Activated CD4-positive, alpha-beta memory T cell treated with anti-CD3 and anti-CD28 coated beads for 36 hours (primary cell): ENCODE measurements at regions of chr17 and their contacts with region 1.

Region 1: DNA sequence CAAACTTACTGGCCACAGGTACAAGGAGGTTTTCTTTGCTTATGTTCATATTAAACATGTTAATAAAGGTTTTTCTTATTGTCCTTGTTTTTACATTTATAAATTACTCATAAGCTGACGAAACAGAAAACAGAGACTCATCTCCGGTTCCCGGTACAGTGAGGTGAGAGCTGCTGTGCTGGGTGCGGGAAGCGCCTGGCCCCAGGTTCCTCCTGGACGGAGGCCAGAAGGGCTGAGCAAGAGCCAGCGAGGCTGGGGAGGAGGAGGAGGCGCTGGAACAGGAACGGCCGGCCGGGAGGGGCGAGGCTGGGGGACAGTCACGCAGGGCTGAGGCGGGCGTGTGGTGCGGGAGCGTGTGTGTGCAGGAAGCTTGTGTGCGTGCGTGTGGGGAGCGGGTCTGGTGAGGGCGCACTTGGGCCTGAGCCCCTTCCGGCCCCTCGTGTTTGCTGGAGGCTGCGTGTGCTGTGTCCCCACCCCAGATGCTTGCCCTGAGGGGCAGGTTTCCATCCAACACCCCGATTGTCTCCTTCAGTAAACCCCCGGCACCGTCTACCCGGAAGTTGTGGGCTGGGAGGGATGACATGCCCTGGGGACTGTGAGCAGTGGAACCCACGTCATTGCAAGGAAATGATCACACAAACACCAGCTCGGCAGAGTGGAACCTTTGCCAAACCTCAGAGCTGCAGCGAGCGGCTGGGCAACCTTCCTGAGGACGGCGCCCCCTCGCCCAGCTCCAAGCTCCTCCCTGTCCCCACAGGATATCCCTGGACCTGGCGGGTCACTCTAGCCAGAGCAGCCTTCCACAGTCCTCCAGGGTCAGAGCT is 19.5 kb downstream of the CD7 start:
- DNase-seq: peak; percentile 96
- H3K4me3 Mint-ChIP-seq: peak overlapping the region; percentile 93
- H3K27ac Mint-ChIP-seq: peak overlapping the region; percentile 100
- H3K4me1 Mint-ChIP-seq: peaks cover 77% of the 10 kb centered on the region
- H3K27me3 Mint-ChIP-seq: no peaks in the 10 kb centered on the region

Region 2: GRCh38 chr17:82205719-82206508 is 92.0 kb before region 1 on chr17:
- CTCF ChIA-PET with region 1: interaction called, 5 read pairs
- POLR2A ChIA-PET with region 1: interaction called, 5 read pairs
- intact Hi-C with region 1: loop called (anchors 5 kb)
- DNase-seq: peak; percentile 89
- H3K4me3 Mint-ChIP-seq: peak overlapping the region; percentile 63
- H3K27ac Mint-ChIP-seq: peak overlapping the region; percentile 93
- H3K4me1 Mint-ChIP-seq: peaks cover 53% of the 10 kb centered on the region
- H3K27me3 Mint-ChIP-seq: no peaks in the 10 kb centered on the region

Region 3: GRCh38 chr17:82236142-82236981 is 61.6 kb before region 1 on chr17:
- CTCF ChIA-PET with region 1: interaction called, 11 read pairs
- POLR2A ChIA-PET with region 1: interaction called, 18 read pairs
- intact Hi-C with region 1: no loop called
- DNase-seq: peak; percentile 79
- H3K4me3 Mint-ChIP-seq: no peak overlapping the region
- H3K27ac Mint-ChIP-seq: no peak overlapping the region
- H3K4me1 Mint-ChIP-seq: peaks cover 50% of the 10 kb centered on the region
- H3K27me3 Mint-ChIP-seq: no peaks in the 10 kb centered on the region

Region 4: DNA sequence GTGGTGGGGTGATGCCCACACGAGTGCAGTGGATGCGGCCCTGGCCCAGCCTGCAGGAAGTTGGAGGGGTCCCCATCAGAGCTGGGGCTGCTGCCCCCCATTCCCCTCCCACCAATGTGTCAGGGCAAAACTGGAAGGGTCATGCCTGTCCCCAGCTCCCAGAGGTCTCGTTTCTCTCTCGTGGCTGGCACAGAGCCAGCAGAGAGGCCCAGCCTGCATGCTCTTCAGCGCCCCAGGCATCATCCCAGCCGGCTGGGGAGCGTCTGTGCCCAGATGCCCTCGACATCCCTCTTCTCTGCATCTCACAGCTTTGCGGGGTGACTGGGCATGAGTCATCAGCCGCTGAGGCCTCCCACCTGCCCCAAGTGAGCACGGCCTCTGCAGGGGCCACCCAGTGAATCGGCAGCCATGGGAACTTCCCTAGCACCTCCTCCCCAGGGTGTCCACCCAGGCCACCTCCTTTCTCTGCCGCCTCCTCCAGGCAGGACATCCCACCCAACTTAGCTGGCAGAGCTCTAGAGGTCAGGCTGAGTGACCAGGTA is 14.6 kb before region 1 on chr17:
- CTCF ChIA-PET with region 1: interaction called, 7 read pairs
- POLR2A ChIA-PET with region 1: interaction called, 40 read pairs
- intact Hi-C with region 1: loop called (anchors 2 kb)
- DNase-seq: peak; percentile 88
- H3K4me3 Mint-ChIP-seq: peak overlapping the region; percentile 51
- H3K27ac Mint-ChIP-seq: peak overlapping the region; percentile 74
- H3K4me1 Mint-ChIP-seq: peaks cover 43% of the 10 kb centered on the region
- H3K27me3 Mint-ChIP-seq: no peaks in the 10 kb centered on the region

Region 5: DNA sequence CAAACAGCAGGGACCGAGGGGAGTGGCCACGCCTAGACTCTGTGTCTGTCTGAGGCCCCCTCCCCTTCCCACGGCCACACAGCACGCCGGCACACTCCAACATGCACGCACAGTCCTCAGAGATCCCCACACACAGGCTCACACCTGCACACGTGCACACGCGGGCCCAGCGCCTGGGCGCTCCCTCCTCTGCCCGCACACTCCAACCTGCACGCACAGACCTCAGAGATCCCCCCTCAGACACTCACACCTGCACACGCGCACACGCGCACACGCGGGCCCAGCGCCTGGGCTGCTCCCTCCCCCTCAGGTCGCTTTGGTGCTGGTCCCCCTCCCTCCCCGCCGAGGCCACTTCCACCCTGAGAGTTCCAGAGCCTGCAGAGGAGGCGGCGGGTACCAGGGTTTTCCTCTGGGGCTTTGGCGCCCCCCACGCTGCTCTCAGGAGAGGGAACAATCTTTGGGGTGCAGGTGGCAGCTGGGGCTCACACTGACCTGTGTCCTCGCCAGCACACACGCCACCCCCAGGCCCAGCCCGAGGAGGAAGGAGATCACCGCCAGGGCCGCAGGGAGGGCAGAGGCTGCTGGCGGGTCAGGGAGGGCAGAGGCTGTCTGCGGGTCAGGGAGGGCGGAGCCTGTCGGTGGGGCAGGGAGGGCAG is 17.9 kb after region 1 on chr17:
- CTCF ChIA-PET with region 1: interaction called, 113 read pairs
- POLR2A ChIA-PET with region 1: interaction called, 103 read pairs
- intact Hi-C with region 1: loop called (anchors 1 kb)
- DNase-seq: peak; percentile 64
- H3K4me3 Mint-ChIP-seq: no peak overlapping the region
- H3K27ac Mint-ChIP-seq: peak overlapping the region; percentile 92
- H3K4me1 Mint-ChIP-seq: peaks cover 19% of the 10 kb centered on the region
- H3K27me3 Mint-ChIP-seq: no peaks in the 10 kb centered on the region

Region 6: DNA sequence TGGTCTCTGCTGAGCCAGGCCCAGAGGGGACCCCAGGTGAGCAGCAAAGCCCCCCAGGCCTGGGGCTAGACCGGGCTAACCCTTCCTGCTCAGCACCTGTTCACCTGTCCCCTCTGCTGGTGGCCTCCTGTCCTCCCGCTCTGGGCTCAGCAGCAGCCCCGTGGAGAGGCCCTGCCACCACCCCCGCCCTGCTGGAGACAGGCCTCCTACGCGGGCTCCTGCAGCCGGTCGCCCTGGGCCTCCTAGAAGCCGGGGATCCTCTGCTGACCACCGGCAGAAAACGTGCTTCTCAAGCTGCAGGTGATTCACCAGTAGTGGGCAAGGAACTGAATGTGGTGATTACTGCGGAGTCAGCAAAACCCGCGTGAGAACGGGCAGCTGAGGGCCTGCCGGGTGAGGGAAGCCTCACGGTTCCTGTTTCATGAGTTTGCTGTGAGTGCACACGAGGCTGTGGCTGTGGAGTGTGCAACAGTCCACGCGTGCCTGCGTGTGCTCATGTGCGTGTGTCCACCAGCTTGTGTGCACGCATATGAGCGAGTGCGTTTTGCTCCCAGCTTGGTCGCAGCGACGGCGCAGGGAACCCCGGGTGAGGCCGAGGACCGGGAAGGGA is 34.8 kb after region 1 on chr17:
- CTCF ChIA-PET with region 1: interaction called, 11 read pairs
- POLR2A ChIA-PET with region 1: interaction called, 19 read pairs
- intact Hi-C with region 1: no loop called
- DNase-seq: peak; percentile 60
- H3K4me3 Mint-ChIP-seq: peak overlapping the region; percentile 77
- H3K27ac Mint-ChIP-seq: no peak overlapping the region
- H3K4me1 Mint-ChIP-seq: peaks cover 29% of the 10 kb centered on the region
- H3K27me3 Mint-ChIP-seq: no peaks in the 10 kb centered on the region

Region 7: DNA sequence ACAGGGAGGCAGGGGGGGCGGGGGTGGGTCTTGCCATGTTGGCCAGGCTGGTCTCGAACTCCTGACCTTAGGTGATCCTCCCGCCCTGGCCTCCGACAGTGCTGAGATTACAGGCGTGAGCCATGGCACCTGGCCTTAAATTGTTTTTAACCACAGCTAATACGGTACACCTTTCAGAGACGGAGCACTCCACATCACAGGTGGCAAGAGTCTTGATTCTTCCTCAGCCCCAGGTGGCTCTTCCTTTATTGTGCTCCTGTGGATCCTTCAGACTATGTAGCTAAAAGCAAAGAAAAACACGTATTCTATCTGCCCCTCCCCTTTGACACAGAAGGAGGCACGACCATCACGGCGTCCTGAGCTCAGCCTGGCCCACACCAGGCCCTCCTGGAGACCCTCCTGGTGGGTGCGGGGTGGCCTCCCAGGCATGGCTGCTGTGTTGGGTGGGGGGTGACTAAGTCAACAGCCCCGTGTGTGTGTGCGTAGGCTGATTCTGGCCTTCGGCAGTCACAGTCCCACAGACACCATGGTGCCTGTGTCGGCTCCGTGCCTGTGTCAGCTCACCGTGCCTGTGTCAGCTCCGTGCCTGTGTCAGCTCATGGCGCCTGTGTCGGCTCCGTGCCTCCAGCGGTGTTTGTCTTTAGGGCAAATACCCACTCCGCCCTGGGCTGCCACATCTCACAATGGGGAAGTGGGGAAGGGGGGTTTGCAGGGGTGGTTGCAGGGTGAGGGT is 46.4 kb after region 1 on chr17:
- CTCF ChIA-PET with region 1: no interaction called
- POLR2A ChIA-PET with region 1: no interaction called
- intact Hi-C with region 1: no loop called
- DNase-seq: no peak
- H3K4me3 Mint-ChIP-seq: no peak overlapping the region
- H3K27ac Mint-ChIP-seq: no peak overlapping the region
- H3K4me1 Mint-ChIP-seq: peaks cover 5% of the 10 kb centered on the region
- H3K27me3 Mint-ChIP-seq: peaks cover 5% of the 10 kb centered on the region

Region 8: DNA sequence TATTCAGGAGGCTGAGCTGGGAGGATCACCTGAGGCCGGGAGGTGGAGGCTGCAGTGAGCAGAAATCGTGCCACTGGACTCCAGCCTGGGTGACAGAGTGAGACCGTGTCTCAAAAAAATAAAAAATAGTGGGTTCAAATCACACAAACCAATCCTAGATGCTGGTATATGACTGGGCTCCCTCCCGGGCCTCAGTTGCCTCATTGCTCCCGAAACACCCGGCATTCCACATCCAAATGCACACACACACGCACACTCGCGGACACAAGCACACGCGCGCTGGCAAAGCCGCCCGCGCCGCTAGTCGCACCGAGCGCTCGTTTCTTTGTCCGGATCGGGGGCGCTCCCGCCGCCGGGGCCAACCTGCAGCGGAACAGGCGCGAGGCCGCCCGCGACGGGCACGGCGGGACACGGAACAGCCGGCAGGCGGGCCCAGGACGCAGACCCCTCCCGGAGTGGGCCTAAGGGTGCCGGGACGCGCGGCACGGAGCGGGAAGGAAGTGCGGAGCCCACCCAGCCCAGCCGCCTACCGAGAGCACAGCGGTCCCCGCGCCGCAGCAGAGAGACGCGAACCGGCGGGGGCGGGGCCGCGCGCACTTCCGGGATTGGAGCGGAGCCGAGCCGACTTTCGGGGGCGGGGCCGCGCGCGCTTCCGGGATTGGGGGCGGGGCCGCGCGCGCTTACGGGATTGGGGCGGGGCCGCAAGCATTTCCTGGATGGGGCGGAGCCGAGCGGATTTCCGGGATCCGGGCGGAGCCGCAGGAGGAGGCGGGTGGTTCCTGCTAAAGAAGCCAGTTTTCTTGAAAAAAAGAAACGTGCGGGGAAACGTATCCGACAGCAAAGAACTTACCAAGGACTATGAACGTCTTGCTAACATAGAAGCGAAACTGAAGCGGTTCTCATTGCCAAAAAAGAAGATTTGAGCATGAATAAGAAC is 152.5 kb after region 1 on chr17 and contains the start of gene CYBC1:
- CTCF ChIA-PET with region 1: no interaction called
- POLR2A ChIA-PET with region 1: interaction called, 11 read pairs
- intact Hi-C with region 1: loop called (anchors 2 kb)
- DNase-seq: peak; percentile 97
- H3K4me3 Mint-ChIP-seq: peak within 1 kb of the TSS; percentile 85
- H3K27ac Mint-ChIP-seq: peak within 1 kb of the TSS; percentile 99
- H3K4me1 Mint-ChIP-seq: peaks cover 46% of the 10 kb centered on the region
- H3K27me3 Mint-ChIP-seq: no peaks in the 10 kb centered on the region
- total RNA-seq, gene CYBC1: 333 to 343 TPM